CD14-positive monocyte (primary cell): ENCODE measurements at regions of chr7 and their contacts with region 1.

Region 1: GRCh38 chr7:133081599-133082389 is at the start of gene CHCHD3:
- DNase-seq: peak; percentile 93 to 98 (median 93)
- H3K4me3 ChIP-seq: peak within 1 kb of the TSS; percentile 62 to 93 (median 91)
- H3K4me3 Mint-ChIP-seq: peak within 1 kb of the TSS; percentile 90 to 93
- H3K27ac ChIP-seq: peak within 1 kb of the TSS; percentile 56 to 95
- H3K27ac Mint-ChIP-seq: peak within 1 kb of the TSS; percentile 90 to 98 (median 95)
- H3K4me1 ChIP-seq: peaks cover 9 to 14% of the 10 kb centered on the region in 2 donors
- H3K4me1 Mint-ChIP-seq: peaks cover 18% of the 10 kb centered on the region
- H3K27me3 ChIP-seq: no peaks in the 10 kb centered on the region
- H3K27me3 Mint-ChIP-seq: peaks cover 0 to 3% (median 0%) of the 10 kb centered on the region in 3 donors
- CTCF ChIP-seq: no peak
- polyA plus RNA-seq, gene CHCHD3: 30.5 to 56.7 (median 48.8) TPM

Region 2: DNA sequence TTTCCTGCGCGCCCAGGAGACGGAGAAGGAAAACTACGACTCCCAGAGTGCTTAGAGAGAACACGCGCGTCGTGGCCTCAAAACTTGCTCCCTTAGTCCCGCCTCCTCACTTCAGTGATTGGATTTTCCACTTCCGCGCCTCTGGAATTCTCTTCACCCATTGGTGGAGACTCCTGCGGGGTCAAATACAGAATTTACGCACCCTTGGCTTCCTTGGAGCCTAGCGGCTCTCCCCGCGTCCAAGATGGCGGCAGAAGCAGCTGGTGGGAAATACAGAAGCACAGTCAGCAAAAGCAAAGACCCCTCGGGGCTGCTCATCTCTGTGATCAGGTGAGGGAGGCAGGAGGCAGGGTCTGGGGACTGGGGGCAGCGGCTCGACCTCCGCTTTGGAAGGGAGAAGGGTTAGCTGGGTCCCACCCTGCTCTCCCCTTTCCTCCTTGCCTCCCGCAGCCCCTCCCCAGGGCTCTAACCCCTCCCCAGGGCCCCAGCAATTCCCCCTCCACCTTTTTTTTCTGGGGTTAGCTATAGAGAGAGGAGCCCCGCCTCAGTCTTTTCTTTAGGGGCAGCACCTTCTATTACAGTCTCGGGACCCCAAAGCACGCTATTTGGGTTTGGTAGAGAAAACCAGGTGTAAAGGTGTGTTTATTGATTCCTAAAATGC is 171.2 kb after region 1 on chr7 and contains the start of gene EXOC4:
- intact Hi-C with region 1: loop called in 1 of 2 experiments (anchors 5 kb)
- DNase-seq: peak; percentile 96 to 98 (median 96)
- H3K4me3 ChIP-seq: peak within 1 kb of the TSS; percentile 85 to 91 (median 91)
- H3K4me3 Mint-ChIP-seq: peak within 1 kb of the TSS; percentile 84 to 91
- H3K27ac ChIP-seq: peak within 1 kb of the TSS; percentile 65 to 96
- H3K27ac Mint-ChIP-seq: peak within 1 kb of the TSS; percentile 87 to 99 (median 97)
- H3K4me1 ChIP-seq: peaks cover 27 to 33% of the 10 kb centered on the region in 2 donors
- H3K4me1 Mint-ChIP-seq: peaks cover 30% of the 10 kb centered on the region
- H3K27me3 ChIP-seq: no peaks in the 10 kb centered on the region
- H3K27me3 Mint-ChIP-seq: no peaks in the 10 kb centered on the region
- CTCF ChIP-seq: no peak
- polyA plus RNA-seq, gene EXOC4: 20.6 to 22.3 (median 22.3) TPM

Region 3: GRCh38 chr7:133545613-133546012 is 463.8 kb after region 1 on chr7:
- intact Hi-C with region 1: no loop called
- DNase-seq: no peak
- H3K4me3 ChIP-seq: no peak overlapping the region
- H3K4me3 Mint-ChIP-seq: no peak overlapping the region
- H3K27ac ChIP-seq: no peak overlapping the region
- H3K27ac Mint-ChIP-seq: no peak overlapping the region
- H3K4me1 ChIP-seq: no peaks in the 10 kb centered on the region
- H3K4me1 Mint-ChIP-seq: peaks cover 3% of the 10 kb centered on the region
- H3K27me3 ChIP-seq: no peaks in the 10 kb centered on the region
- H3K27me3 Mint-ChIP-seq: no peaks in the 10 kb centered on the region
- CTCF ChIP-seq: no peak

Region 4: DNA sequence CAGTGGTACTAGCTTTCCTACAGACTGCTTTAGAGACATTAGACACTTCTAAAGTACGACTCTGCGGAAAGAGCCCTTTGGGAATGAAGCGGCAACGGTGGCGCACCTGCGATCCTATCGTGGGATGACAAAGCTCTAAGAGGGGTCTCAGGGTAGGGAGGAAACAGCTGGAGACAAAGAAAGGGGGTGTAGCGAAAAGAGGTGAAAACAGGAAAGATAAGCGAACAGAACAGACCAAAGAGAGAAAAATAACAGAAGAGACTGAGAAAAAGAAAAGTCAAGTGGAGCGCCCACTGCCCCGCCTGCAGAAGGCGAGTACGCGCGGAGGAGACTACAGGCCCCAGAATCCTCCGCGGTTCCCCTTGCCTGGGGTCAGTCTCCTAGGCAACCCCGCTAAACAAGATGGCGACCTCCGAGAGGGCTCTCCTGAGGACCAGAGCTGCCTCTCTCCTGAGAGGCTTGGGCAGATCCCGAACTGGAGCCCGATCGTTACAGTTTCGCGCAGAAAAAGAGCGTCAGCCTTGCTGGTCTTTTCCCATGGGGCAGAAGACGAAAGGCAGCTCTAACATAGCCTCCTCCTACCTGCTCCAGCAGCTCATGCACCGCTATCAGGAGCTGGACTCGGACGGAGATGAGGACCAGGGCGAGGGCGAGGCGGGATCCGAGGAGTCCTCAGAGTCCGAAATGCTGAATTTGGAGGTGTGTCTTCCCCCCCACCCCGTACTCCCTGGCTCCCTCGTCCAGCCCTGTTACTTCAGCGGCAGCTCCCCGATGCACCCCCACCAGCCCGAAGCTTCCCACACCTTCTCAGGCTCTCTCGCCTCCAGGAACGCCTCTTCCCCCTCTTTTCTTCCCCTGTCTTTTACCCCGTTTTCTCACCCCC is 1045.4 kb after region 1 on chr7 and contains the start of gene LRGUK:
- intact Hi-C with region 1: loop called in 1 of 2 experiments (anchors 5 kb)
- DNase-seq: peak; percentile 66 to 79 (median 73)
- H3K4me3 ChIP-seq: peak within 1 kb of the TSS; percentile 48 to 86 (median 65)
- H3K4me3 Mint-ChIP-seq: peak within 1 kb of the TSS; percentile 83 to 96
- H3K27ac ChIP-seq: no peak within 1 kb of the TSS
- H3K27ac Mint-ChIP-seq: peak within 1 kb of the TSS in 3 of 7 donors; percentile 41 to 73 (median 64)
- H3K4me1 ChIP-seq: peaks cover 28 to 32% of the 10 kb centered on the region in 2 donors
- H3K4me1 Mint-ChIP-seq: peaks cover 28% of the 10 kb centered on the region
- H3K27me3 ChIP-seq: peaks cover 0 to 2% of the 10 kb centered on the region in 2 donors
- H3K27me3 Mint-ChIP-seq: peaks cover 2 to 6% (median 5%) of the 10 kb centered on the region in 3 donors
- CTCF ChIP-seq: no peak
- polyA plus RNA-seq, gene LRGUK: 0.41 TPM in 1 of 3 donors, not detected in the others